ENCODE measurements at regions of chr20 and their contacts with region 1.

Region 1: GRCh38 chr20:2840138-2840966 is at the starts of genes PCED1A and VPS16:
- DNase-seq: peak; percentile 87 to 99 (median 90)

Region 2: DNA sequence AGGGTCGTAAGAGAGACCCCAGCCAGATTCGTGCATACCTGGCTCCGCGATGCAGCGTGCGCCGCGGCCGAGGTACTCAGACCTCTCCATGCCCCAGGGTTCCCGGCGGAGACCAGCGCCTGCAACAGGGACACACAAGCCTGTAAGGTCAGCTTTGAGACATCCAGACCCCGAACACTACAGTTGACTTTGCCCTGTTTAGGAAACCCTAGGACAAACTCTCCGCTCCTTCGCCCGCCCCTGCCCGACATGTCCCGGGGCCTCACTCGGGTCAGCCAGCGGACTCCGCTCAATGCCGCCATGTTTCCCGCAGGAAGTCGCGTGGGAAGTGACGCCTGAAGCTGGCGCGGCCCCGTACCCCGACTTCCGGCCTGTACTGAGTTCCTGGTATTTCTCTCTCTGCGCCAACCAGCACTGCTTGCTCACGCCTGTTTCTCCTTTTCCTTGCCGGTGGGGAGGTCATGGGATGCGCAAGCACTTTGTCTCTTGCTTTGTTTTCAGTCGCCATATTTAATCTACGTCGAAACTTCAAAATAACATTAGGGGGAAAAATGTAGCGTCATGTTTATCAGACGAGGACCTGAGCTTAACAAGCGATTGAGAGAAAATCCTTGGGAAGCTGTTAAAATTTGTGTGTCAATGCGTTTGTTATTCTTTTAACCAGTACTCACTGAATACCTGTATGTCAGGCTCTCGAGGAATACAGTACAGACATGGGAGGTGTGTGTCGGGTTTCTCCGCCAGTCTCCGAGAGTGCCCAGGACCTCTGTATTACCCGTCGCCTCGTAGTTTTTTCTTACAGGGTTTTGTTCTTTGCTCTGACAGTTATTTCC is 176.2 kb before region 1 on chr20 and contains the start of gene IDH3B:
- intact Hi-C with region 1: loop called (anchors 10 kb)
- DNase-seq: peak; percentile 91 to 99 (median 96)

Region 3: DNA sequence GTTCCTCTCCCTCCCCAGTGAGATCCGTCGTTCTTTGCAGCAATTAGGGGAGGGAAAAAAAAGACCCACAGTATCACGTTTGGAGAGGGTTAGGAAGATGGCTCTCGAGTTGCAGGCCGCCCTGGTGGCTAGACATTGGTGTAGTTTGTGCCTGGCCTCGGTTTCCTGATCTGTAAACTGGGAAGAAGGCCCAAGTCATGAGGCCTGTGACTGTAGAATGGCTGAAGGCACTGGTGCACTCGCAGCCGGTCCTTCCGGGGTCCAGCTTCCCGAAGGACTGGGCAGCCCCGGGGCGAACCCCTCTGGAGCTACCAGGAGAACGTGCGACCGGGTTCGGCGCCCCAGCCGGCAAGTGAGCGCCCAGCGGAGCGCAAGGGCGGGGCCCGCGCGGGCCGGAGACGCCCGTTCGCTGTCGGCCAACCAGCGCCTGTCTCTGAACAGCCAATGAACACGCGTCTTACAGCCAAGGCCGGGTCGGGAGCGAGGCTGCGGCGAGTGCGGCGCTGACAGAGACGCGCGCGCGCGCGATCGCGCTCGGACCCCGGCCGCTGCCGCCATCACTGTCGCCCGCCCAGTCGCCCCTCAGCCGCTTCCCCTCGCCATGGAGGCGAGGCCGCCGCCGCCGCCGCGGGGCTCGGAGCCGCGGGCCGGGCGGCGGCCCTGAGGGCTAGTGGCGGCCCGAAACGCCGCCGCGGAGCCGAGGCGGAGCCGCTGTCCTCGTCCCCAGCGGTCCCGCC is 32.8 kb after region 1 on chr20 and contains the start of gene PTPRA:
- intact Hi-C with region 1: loop called (anchors 2 kb)
- DNase-seq: peak; percentile 93 to 99 (median 96)